Head of caudate nucleus (tissue), 42 donors: ENCODE measurements at regions of chr2 and their contacts with region 1.

Region 1: GRCh38 chr2:48420512-48421197 is 109.3 kb upstream of the STON1 start:
- DNase-seq: peak; percentile 79 to 98 (median 94)

Region 2: DNA sequence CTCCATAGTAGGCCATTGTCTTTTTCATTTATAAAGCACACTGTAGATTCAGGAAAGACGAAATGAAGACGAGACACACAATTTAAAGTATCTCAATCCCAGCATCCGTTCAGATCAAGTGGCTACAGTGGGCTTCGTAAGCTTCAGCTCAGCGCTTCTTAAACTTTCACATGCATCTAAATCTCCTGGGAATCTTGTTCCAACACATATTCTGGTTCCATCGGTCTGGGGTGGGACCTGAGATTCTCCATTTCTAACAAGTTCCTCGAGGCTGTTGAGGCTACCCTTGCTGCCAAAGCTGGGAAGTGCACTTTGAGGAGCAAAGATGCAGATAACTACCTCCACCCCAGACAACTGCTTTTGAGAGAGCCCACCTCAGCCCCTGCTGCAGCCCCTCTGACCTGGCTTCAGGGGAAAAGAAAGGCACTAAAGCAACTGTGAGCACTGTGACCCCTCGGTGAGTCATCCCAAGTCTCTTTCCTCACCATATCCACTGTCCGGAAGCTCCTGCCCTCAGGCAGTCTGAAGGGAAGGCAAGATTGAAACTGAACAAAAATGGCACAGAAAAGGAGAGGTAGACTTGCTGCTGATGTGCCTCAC is 313.2 kb before region 1 on chr2:
- intact Hi-C with region 1: loop called (anchors 1 kb)
- DNase-seq: no peak

Region 3: DNA sequence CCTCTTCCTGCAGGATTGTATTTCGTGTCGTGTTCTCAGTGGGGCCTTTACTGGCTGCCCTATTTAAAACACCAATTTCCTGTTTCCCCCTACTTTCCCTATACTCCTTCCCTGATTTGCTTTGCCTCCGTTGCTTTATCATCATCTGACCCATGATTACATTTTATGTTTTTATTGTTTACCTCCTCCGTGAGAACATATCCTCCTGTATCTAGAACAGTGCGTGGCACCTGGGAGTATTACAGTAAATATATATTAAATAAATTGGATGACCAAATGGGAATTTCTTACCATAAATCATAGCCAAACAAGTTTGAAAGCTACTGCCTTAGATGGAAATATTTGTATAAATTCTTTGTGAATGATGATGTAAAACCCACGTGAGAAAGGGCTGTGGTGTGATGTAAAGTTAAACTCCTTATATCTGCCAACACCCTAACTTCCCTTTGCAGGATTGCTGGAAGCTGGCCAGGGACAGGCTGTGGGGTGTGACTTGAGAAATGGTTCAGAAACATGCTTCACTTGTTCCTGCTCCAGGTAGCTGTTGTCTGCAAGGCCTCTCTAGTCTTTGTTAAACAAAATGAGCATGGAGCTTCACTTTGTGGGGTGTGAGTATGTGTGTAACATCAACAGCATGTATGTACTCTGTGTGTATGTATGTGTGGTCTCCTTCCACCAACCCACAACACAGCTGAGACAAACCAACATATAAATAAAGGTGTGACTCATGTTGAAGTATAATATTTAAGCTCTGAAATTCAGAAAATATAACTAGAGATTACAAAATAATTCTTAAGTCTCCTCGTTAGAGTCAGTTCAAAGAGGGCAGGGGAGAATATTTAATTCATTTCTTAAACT is 294.6 kb after region 1 on chr2:
- intact Hi-C with region 1: no loop called
- DNase-seq: peak in 2 of 42 donors; percentile 14 to 34